Endothelial cell of umbilical vein (primary cell): ENCODE measurements at regions of chr9 and their contacts with region 1.

Region 1: DNA sequence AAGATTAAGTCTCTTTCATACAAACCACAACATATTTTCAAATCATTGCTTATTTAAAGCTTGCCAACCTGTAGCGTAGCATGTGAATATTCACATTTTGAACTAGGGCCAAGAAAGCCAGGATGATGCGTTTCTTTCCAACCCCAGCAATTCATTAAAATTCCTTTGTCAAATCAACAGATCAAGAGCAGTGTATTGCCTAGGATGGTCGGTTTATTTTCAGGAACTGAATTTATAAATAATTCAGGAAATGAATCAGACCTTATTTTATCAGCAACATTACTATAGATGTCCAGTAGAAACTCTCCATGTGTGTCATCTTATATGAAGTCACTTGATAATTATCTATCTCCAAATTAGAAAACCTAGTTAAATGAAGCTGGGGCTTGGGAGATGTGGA is 13.2 kb upstream of the AUH start:
- DNase-seq: peak; percentile 60
- H3K4me3 ChIP-seq: no peak overlapping the region
- H3K27ac ChIP-seq: no peak overlapping the region
- H3K4me1 ChIP-seq: peaks cover 20% of the 10 kb centered on the region
- H3K27me3 ChIP-seq: no peaks in the 10 kb centered on the region
- CTCF ChIP-seq: no peak
- POLR2A ChIP-seq: no peak

Region 2: GRCh38 chr9:91101611-91102168 is 273.2 kb before region 1 on chr9:
- CTCF ChIA-PET with region 1: no interaction called
- POLR2A ChIA-PET with region 1: no interaction called
- dilution Hi-C with region 1: no loop called
- intact Hi-C with region 1: no loop called
- DNase-seq: no peak
- H3K4me3 ChIP-seq: no peak overlapping the region
- H3K27ac ChIP-seq: no peak overlapping the region
- H3K4me1 ChIP-seq: peaks cover 2% of the 10 kb centered on the region
- H3K27me3 ChIP-seq: peaks cover 0 to 8% of the 10 kb centered on the region in 2 experiments
- CTCF ChIP-seq: no peak
- POLR2A ChIP-seq: no peak

Region 3: GRCh38 chr9:91150998-91151717 is 223.8 kb before region 1 on chr9:
- CTCF ChIA-PET with region 1: no interaction called
- POLR2A ChIA-PET with region 1: no interaction called
- dilution Hi-C with region 1: no loop called
- intact Hi-C with region 1: no loop called
- DNase-seq: no peak
- H3K4me3 ChIP-seq: no peak overlapping the region
- H3K27ac ChIP-seq: no peak overlapping the region
- H3K4me1 ChIP-seq: no peaks in the 10 kb centered on the region
- H3K27me3 ChIP-seq: no peaks in the 10 kb centered on the region
- CTCF ChIP-seq: no peak
- POLR2A ChIP-seq: no peak

Region 4: GRCh38 chr9:91361291-91362050 is 13.5 kb before region 1 on chr9 and contains the start of gene AUH:
- CTCF ChIA-PET with region 1: interaction called, 3 read pairs
- POLR2A ChIA-PET with region 1: no interaction called
- dilution Hi-C with region 1: no loop called
- intact Hi-C with region 1: loop called (anchors 2 kb)
- DNase-seq: peak; percentile 82
- H3K4me3 ChIP-seq: peak within 1 kb of the TSS; percentile 84 to 95 (median 88)
- H3K27ac ChIP-seq: peak within 1 kb of the TSS; percentile 26
- H3K4me1 ChIP-seq: peaks cover 15% of the 10 kb centered on the region
- H3K27me3 ChIP-seq: no peaks in the 10 kb centered on the region
- CTCF ChIP-seq: no peak
- POLR2A ChIP-seq: peak; percentile 50
- total RNA-seq, gene AUH: 9.2 and 10.7 TPM in 2 replicates